HEK293 (cell line): ENCODE measurements at regions of chr5 and their contacts with region 1.

Region 1: GRCh38 chr5:134225618-134226440 is at the start of gene PPP2CA:
- H3K4me3 ChIP-seq: peak within 1 kb of the TSS; percentile 100
- H3K27ac ChIP-seq: peak within 1 kb of the TSS; percentile 99
- H3K4me1 ChIP-seq: peaks cover 3% of the 10 kb centered on the region
- CTCF ChIP-seq: peak; percentile 72; the same call in 1 of the 2 replicates

Region 2: GRCh38 chr5:133287500-133287899 is 938.3 kb before region 1 on chr5:
- CTCF ChIA-PET with region 1: no interaction called
- POLR2A ChIA-PET with region 1: no interaction called
- H3K4me3 ChIP-seq: no peak overlapping the region
- H3K27ac ChIP-seq: no peak overlapping the region
- H3K4me1 ChIP-seq: no peaks in the 10 kb centered on the region
- CTCF ChIP-seq: peak; percentile 70

Region 3: DNA sequence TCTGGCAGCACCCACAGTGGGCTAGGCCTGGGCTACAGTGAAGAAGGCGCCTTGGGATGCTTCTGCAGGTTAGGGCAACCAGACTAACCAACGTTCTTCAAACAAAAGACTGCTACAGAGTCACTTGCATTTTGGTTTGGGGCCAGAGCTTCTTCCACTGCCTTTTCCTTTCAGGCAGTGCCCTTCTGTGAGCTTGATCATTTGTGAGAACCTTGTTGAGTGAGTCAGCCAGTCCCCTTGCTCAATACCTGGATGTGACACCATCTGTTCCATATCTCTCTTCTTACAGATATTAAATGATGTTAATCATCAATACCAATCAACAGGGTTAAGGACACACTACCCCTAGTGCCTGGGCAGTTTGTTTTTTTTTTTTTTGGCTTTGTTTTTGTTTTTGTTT is 174.5 kb before region 1 on chr5:
- CTCF ChIA-PET with region 1: no interaction called
- POLR2A ChIA-PET with region 1: no interaction called
- H3K4me3 ChIP-seq: no peak overlapping the region
- H3K27ac ChIP-seq: no peak overlapping the region
- H3K4me1 ChIP-seq: no peaks in the 10 kb centered on the region
- CTCF ChIP-seq: no peak

Region 4: DNA sequence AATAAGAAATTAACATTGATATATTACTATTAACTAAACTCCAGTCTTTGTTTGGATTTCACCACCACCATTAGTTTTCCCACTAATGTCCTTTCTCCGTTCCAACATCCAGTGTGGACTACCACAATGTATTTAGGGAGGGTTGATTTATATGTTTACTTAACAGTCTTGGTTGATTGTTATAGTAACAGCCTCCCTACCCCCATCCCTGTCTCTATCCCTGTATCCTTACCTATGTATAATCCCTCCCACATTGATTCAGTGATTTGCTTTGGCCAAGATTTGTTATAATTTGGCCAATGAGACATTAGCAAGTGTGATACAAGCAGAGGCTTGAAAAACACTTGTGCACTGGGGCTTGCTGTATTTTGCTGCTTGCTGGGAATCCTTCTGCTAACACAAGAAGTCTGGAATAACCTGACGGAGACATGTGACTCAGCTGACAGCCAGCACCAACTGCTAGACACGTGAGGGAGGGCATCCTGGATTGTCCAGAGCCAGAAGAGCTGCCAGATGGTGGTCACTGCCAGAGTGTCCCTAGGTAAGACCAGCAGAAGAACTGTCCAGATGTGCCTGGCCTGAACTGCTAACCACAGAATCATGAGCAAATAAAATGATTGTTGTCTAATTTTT is 162.5 kb before region 1 on chr5:
- CTCF ChIA-PET with region 1: no interaction called
- POLR2A ChIA-PET with region 1: no interaction called
- H3K4me3 ChIP-seq: no peak overlapping the region
- H3K27ac ChIP-seq: no peak overlapping the region
- H3K4me1 ChIP-seq: no peaks in the 10 kb centered on the region
- CTCF ChIP-seq: no peak

Region 5: GRCh38 chr5:134176511-134177368 is 49.1 kb before region 1 on chr5 and contains the start of gene SKP1:
- CTCF ChIA-PET with region 1: no interaction called
- POLR2A ChIA-PET with region 1: interaction called, 15 read pairs
- H3K4me3 ChIP-seq: peak within 1 kb of the TSS; percentile 96
- H3K27ac ChIP-seq: peak within 1 kb of the TSS; percentile 98
- H3K4me1 ChIP-seq: peaks cover 10% of the 10 kb centered on the region
- CTCF ChIP-seq: 0 out of 2 replicates have a peak, but pooled peaks have one; percentile 42

Region 6: DNA sequence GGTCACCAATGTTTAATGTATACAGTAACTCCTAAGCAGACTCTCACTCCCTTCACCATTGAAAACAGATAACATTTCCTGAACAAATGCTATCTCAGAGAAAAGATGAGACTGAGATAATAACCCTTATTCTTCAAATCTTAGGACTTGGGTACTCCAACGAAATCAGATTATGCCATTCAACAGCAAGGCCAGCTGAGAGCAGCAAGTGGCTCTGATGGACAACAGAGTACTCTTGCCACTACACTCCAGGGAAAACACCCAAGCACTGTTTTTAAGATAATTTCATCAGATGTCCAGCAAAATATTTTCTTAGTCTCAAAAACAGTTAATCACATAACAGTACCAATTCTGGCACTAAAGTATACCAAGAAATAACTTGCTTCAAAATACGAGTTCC is 10.1 kb before region 1 on chr5:
- CTCF ChIA-PET with region 1: interaction called, 4 read pairs
- POLR2A ChIA-PET with region 1: interaction called, 19 read pairs
- H3K4me3 ChIP-seq: no peak overlapping the region
- H3K27ac ChIP-seq: no peak overlapping the region
- H3K4me1 ChIP-seq: peaks cover 14% of the 10 kb centered on the region
- CTCF ChIP-seq: no peak

Region 7: GRCh38 chr5:134245101-134245604 is 19.3 kb after region 1 on chr5:
- CTCF ChIA-PET with region 1: interaction called, 5 read pairs
- POLR2A ChIA-PET with region 1: interaction called, 47 read pairs
- H3K4me3 ChIP-seq: no peak overlapping the region
- H3K27ac ChIP-seq: no peak overlapping the region
- H3K4me1 ChIP-seq: peaks cover 3% of the 10 kb centered on the region; the same call in 1 of the 2 replicates
- CTCF ChIP-seq: no peak

Region 8: GRCh38 chr5:134465816-134466240 is 240.0 kb after region 1 on chr5:
- CTCF ChIA-PET with region 1: interaction called, 3 read pairs
- POLR2A ChIA-PET with region 1: interaction called, 10 read pairs
- H3K4me3 ChIP-seq: peak overlapping the region; percentile 54
- H3K27ac ChIP-seq: peak overlapping the region; percentile 90
- H3K4me1 ChIP-seq: peaks cover 3% of the 10 kb centered on the region
- CTCF ChIP-seq: peak; percentile 48; the same call in 1 of the 2 replicates